Activated CD8-positive, alpha-beta T cell treated with anti-CD3 and anti-CD28 coated beads, Interleukin-2, amount 10 ng/mL, durations not matched to agents 7 days and 5 days (primary cell): ENCODE measurements at regions of chr12 and their contacts with region 1.

Region 1: DNA sequence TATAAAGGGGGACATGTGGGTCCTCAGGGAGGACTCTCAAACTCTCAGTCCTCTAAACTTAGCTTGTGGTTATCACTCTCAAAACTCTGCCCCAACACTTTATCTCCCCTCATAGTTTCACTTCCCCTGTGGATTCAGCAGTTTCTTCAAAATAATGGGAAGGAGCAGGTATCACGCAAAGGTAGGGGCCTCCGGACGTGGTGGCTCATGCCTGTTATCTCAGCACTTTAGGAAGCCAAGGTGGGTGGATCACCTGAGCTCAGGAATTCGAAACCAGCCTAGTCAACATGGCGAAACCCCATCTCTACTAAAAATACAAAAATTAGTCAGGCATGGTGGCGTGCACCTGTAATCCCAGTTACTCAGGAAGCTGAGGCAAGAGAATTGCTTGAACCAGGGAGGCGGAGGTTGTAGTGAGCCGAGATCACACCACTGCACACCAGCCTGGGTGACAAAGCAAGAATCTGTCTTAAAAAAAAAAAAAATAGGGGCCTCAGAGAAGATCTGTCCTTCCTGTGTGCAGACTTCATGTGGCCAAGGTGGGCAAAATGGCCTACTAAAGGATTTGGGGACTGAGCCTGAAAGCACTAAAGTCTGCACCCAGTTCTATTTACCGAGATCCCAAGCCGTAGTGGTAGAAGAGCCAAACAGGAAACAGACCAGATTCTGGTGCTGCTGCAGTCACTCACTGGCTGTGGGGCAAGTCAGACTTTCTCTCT is 6.4 kb downstream of the ITGB7 start:
- DNase-seq: peak; percentile 57
- ATAC-seq: peak; percentile 44
- H3K4me3 Mint-ChIP-seq: peak overlapping the region; percentile 68
- H3K27ac Mint-ChIP-seq: peak overlapping the region; percentile 88
- H3K4me1 Mint-ChIP-seq: peaks cover 79% of the 10 kb centered on the region
- H3K27me3 Mint-ChIP-seq: no peaks in the 10 kb centered on the region

Region 2: GRCh38 chr12:52980693-52981423 is 219.8 kb before region 1 on chr12:
- CTCF ChIA-PET with region 1: no interaction called
- POLR2A ChIA-PET with region 1: no interaction called
- DNase-seq: peak; percentile 90
- ATAC-seq: peak; percentile 91
- H3K4me3 Mint-ChIP-seq: no peak overlapping the region
- H3K27ac Mint-ChIP-seq: no peak overlapping the region
- H3K4me1 Mint-ChIP-seq: no peaks in the 10 kb centered on the region
- H3K27me3 Mint-ChIP-seq: peaks cover 30% of the 10 kb centered on the region

Region 3: DNA sequence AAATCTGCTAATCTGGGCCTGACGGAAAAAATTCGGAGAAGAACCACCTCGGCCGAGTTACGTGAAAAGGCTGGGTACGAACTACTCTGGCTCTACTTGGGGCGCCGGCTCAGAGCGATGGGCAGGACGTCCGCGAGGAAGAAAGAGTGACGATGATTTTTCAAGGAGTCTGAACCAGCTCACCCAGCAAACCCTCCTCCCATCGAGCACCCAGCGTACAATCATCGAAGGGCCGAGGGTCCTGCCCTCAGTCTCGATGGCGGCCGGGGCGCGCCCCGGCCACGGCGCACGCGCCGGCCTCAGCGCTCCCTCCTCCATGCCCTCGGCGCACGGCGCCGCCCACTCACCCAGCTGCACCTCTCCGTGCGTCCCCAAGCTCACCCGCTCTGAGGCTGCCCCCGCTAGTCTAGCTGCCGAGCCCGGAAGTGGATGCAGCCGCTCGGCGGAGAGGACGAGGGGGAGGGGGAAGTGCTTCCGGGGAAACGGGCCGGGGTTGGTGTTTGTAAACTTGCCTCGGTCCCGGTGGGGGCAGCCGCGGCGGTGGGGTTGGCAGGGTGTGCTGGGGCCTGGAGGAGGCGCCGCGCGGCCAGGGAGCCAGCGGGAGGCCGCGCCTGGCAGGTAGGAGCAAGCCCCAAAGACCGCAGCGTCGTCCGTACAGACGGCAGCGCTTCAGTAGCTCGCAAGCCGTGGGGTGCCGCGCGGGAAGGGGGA is 20.2 kb before region 1 on chr12 and contains the starts of genes CSAD and ZNF740:
- CTCF ChIA-PET with region 1: interaction called, 8 read pairs
- POLR2A ChIA-PET with region 1: interaction called, 57 read pairs
- DNase-seq: peak; percentile 98
- ATAC-seq: peak; percentile 97
- H3K4me3 Mint-ChIP-seq: peak within 1 kb of the TSS; percentile 86
- H3K27ac Mint-ChIP-seq: peak within 1 kb of the TSS; percentile 98
- H3K4me1 Mint-ChIP-seq: peaks cover 50% of the 10 kb centered on the region
- H3K27me3 Mint-ChIP-seq: no peaks in the 10 kb centered on the region
- total RNA-seq, gene CSAD: 15.7 to 17.0 TPM
- total RNA-seq, gene ZNF740: 28.2 to 31.4 TPM

Region 4: DNA sequence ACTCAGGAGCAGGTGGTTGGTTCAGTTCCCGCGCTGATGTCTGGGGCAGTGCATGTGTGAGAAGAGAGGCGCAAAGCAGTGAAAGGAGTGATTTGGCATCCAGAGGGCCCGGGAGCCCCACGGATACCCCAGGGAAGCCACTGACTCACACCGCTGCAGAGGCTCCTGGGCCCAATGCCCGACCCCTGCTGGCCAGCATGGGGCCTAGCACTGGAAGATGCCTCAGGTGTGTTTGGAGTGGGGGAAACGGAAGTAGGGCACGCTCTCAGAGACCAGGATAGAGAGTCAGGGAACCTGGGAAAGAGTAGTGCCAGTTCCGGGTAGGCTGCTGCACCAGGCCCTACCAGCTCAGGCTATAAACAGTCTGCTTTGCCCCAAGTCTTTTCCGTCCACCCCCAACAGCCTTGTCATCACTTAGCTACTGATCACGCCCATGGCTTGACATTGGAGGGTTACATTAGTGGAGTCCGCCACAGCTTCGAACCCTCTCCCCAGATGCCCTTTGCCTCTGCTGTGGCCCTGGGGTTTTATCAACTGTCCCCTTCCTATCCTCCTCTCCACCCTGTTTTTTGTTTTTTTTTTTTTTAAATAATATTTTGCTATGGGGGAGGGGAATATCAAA is 10.4 kb before region 1 on chr12:
- CTCF ChIA-PET with region 1: interaction called, 47 read pairs
- POLR2A ChIA-PET with region 1: interaction called, 29 read pairs
- DNase-seq: peak; percentile 59
- ATAC-seq: peak; percentile 87
- H3K4me3 Mint-ChIP-seq: no peak overlapping the region
- H3K27ac Mint-ChIP-seq: peak overlapping the region; percentile 42
- H3K4me1 Mint-ChIP-seq: peaks cover 35% of the 10 kb centered on the region
- H3K27me3 Mint-ChIP-seq: no peaks in the 10 kb centered on the region

Region 5: DNA sequence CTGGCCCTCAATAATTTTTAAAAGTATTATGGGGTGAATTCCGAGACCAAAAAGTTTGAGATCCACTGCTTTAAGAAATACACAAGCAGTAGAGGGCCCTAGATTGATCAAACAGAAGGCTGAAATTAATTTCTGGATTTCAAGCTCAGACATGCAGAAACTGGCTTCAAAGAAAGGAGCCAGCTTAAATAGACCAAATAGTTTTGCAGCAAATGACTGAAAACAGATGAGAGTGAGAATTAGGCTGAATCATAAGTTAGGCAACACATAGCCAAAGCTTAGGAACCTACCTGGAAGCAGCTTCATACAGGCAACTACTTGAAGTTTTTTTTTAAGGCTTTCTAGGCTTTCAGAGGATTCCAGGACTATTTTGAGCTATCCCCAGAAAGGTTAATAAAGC is 413.2 kb after region 1 on chr12:
- CTCF ChIA-PET with region 1: no interaction called
- POLR2A ChIA-PET with region 1: no interaction called
- DNase-seq: no peak
- ATAC-seq: no peak
- H3K4me3 Mint-ChIP-seq: no peak overlapping the region
- H3K27ac Mint-ChIP-seq: no peak overlapping the region
- H3K4me1 Mint-ChIP-seq: peaks cover 31% of the 10 kb centered on the region
- H3K27me3 Mint-ChIP-seq: no peaks in the 10 kb centered on the region